PC-9 (cell line): ENCODE measurements at regions of chr7 and their contacts with region 1.

Region 1: DNA sequence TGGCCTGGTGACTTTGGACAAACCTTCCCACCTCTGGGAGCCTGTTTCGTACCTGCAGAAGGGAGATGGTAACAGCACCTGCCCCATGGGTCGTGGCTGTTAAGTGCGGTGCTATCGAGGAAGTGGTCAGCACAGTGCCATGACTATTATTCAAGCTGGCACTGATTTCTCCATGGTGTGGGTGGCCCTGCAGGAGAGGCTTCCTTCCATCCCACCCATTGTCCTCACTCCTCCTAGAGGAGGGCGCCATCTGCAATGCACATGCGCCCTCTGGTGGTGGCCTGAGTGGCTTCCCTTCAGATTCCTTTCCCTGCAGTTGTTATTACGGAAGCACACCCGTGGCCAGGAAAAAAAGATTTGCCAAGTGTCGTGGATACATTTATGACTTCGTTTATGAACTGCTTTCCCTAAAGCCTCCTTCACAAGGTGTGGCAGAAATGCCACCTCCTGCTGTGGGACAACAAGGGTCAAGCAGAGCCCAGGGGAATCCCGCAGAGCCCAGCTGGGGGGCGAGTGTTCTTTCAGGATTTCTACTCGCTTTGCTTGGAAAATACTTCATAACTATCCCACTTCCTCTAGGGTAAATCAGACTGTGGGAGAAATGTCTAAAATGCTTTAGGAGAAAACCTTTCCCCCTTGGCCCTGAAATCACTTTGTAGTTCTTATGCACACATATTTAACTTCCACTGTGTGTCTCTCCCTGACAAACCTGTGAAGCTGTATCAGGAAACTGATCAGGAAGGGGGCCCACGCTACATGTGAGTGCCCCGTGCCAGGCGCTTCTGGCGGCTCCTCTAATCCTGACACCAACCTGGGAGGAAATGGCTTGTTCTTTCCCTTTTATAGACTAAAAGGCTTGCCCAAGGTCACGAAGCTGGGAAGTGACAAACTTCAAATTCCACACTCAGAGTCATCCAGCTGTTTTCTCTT is 98.0 kb upstream of the ANLN start:
- DNase-seq: peak; percentile 70 to 80
- H3K4me3 ChIP-seq: no peak overlapping the region
- H3K27ac ChIP-seq: no peak overlapping the region
- H3K4me1 ChIP-seq: peaks cover 56% of the 10 kb centered on the region
- H3K27me3 ChIP-seq: no peaks in the 10 kb centered on the region
- CTCF ChIP-seq: peak; percentile 100

Region 2: GRCh38 chr7:35985126-35985754 is 306.4 kb before region 1 on chr7:
- CTCF ChIA-PET with region 1: interaction called, 4 read pairs
- POLR2A ChIA-PET with region 1: no interaction called
- intact Hi-C with region 1: loop called (anchors 1 kb)
- DNase-seq: peak; percentile 57 to 84
- H3K4me3 ChIP-seq: no peak overlapping the region
- H3K27ac ChIP-seq: no peak overlapping the region
- H3K4me1 ChIP-seq: peaks cover 18% of the 10 kb centered on the region
- H3K27me3 ChIP-seq: no peaks in the 10 kb centered on the region
- CTCF ChIP-seq: peak; percentile 99

Region 3: DNA sequence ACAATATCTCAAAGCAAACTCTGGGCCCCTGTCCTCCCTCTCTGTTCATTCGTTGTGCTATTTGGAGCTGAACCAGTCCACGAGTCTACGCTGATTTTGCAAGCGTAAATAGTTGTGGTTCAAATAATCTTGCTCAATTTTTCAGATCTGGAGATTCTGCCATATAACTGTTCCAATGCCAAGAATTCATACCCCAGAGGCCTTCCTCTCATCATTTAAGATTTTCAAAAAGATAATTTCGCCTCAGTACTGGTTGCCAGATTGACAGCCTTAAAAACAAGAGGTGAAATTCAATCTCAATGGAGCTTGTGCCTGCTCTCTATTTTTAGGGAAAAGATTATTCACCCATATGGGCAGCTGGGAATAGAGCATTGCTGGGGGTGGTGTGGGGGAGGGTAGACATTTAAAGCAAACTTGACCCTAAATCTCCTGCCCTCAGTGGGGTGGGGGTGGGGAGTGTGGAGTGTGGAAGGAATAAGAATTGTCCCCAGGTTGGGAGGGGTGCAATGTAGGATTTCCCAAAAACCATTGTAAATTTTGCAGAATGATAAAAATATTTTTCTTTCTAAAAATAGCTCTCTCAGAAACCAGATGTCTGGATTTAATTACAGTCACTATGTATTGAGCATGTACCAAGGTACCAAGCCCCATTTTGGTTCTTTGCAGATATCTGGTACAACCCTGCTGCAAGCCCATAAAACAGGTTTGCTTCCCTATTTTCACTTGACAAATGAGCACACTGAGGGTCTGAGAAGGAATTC is 243.3 kb before region 1 on chr7:
- CTCF ChIA-PET with region 1: no interaction called
- POLR2A ChIA-PET with region 1: interaction called, 4 read pairs
- intact Hi-C with region 1: loop called (anchors 1 kb)
- DNase-seq: peak; percentile 55 to 98
- H3K4me3 ChIP-seq: no peak overlapping the region
- H3K27ac ChIP-seq: peak overlapping the region; percentile 28
- H3K4me1 ChIP-seq: peaks cover 61% of the 10 kb centered on the region
- H3K27me3 ChIP-seq: no peaks in the 10 kb centered on the region
- CTCF ChIP-seq: no peak

Region 4: GRCh38 chr7:36152756-36153570 is 138.7 kb before region 1 on chr7 and contains the start of gene EEPD1:
- CTCF ChIA-PET with region 1: no interaction called
- POLR2A ChIA-PET with region 1: interaction called, 5 read pairs
- intact Hi-C with region 1: loop called (anchors 1 kb)
- DNase-seq: peak; percentile 97 to 100
- H3K4me3 ChIP-seq: peak within 1 kb of the TSS; percentile 71
- H3K27ac ChIP-seq: peak within 1 kb of the TSS; percentile 24; the same call in 1 of the 2 replicates
- H3K4me1 ChIP-seq: peaks cover 63% of the 10 kb centered on the region
- H3K27me3 ChIP-seq: no peaks in the 10 kb centered on the region
- CTCF ChIP-seq: no peak
- total RNA-seq, gene EEPD1: 6.0 and 9.4 TPM in 2 replicates

Region 5: DNA sequence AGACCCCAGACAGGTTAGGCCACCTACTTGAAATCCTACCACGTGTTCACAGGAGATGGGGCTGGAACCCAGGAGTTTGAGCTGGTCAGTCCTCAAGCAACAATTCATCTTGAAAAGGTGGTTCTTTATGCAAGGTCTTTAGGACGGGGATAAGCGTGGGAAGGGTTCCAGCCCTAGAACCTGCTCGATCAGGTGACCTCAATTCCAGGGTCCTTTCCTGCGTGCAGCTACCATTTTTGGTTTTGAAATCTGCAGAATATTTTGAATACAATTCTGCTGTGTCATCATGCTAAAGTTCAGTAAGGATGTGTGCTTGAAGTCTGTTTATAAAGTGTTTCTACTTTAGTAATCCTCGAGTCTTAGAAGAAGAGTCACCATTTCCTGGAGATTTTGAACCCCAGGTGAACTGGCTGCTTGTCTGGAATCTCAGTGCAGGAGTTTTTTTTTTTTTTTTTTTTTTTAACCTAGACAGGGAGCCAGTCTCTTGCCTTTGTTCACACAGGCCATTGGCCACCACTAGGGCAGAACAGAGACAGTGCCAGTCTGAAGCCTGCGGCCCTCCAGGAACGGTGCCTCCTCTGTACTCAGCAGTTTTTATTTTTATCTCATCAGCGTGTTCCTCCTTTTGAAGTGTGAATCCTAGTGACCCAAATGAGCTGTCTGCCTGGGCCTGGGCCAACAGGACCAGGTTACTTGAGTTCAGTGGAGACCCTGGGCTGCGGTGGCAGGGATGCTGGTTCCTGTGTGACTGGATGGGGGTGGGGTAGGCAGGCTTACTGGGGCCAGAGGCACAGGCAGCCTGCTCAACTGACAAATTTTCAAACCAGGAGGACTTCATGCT is 84.0 kb before region 1 on chr7:
- CTCF ChIA-PET with region 1: no interaction called
- POLR2A ChIA-PET with region 1: no interaction called
- intact Hi-C with region 1: loop called (anchors 1 kb)
- DNase-seq: peak; percentile 51 to 100
- H3K4me3 ChIP-seq: no peak overlapping the region
- H3K27ac ChIP-seq: peak overlapping the region; percentile 75
- H3K4me1 ChIP-seq: peaks cover 38% of the 10 kb centered on the region
- H3K27me3 ChIP-seq: no peaks in the 10 kb centered on the region
- CTCF ChIP-seq: peak; percentile 46; the same call in 1 of the 2 replicates